Endothelial cell of umbilical vein (primary cell): ENCODE measurements at regions of chr19 and their contacts with region 1.

Region 1: DNA sequence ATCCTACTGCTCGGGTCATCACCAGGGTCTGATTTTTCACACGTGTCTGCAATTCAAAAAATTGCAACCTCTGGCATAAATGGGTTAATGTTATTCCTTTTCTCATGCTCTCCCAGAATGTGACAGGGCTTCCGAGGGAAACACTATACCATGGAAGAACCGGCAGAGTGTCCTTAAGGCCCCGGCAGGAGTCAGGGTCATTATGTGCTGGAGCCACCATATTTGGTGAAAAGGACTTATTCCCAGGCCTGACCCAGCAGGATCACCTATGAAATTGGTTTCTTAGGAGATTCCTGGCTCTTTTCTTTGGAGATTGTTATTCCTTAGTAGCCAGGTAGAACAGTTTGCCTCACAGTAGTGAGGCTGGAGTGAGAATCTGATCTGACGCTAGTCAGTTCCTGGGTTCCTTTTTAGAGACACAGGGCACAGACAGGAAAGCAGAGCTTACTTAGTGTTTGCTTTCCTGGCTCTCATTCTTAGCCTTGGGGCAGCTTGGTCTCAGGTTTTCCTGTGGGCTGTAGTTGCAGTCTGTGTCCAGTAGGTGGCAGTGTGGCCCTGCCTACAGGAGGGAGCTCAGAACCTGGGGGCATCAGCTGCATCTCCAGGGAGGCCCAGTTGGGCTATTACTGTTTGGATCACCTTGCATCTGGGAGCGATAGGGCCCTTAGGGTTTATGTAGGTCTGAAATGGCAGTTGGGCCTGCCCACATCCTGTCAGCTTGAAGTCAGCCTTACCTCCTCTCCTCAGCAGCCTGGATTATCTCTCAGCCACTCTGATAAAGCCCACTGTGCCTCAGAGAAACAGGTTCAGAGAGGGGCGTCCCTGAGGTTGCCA is 12.4 kb downstream of the SNRNP70 start:
- DNase-seq: peak; percentile 74
- H3K4me3 ChIP-seq: no peak overlapping the region
- H3K27ac ChIP-seq: no peak overlapping the region
- H3K4me1 ChIP-seq: no peaks in the 10 kb centered on the region
- H3K27me3 ChIP-seq: no peaks in the 10 kb centered on the region
- CTCF ChIP-seq: peak; percentile 96 to 98
- POLR2A ChIP-seq: no peak

Region 2: DNA sequence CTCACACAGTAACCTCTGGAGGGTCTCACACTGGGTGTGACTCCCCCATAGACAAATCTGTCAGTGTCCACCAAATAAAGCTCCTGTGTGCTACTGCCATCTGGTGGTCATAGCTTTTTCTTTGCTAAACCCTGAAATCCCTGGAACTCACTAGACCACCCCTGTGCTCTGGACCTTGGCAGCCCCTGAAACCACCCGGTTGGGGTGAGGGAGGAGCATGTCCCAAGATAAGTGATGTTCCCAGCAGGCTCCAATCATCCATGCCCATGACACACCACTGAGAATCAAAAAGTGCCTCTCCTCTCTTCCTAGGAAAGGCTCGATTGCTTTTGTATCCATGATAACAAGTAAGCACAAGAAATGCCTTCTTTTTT is 254.9 kb before region 1 on chr19:
- CTCF ChIA-PET with region 1: no interaction called
- POLR2A ChIA-PET with region 1: no interaction called
- dilution Hi-C with region 1: no loop called
- intact Hi-C with region 1: no loop called
- DNase-seq: peak; percentile 62
- H3K4me3 ChIP-seq: no peak overlapping the region
- H3K27ac ChIP-seq: no peak overlapping the region
- H3K4me1 ChIP-seq: no peaks in the 10 kb centered on the region
- H3K27me3 ChIP-seq: no peaks in the 10 kb centered on the region
- CTCF ChIP-seq: peak; percentile 73 to 79
- POLR2A ChIP-seq: no peak

Region 3: DNA sequence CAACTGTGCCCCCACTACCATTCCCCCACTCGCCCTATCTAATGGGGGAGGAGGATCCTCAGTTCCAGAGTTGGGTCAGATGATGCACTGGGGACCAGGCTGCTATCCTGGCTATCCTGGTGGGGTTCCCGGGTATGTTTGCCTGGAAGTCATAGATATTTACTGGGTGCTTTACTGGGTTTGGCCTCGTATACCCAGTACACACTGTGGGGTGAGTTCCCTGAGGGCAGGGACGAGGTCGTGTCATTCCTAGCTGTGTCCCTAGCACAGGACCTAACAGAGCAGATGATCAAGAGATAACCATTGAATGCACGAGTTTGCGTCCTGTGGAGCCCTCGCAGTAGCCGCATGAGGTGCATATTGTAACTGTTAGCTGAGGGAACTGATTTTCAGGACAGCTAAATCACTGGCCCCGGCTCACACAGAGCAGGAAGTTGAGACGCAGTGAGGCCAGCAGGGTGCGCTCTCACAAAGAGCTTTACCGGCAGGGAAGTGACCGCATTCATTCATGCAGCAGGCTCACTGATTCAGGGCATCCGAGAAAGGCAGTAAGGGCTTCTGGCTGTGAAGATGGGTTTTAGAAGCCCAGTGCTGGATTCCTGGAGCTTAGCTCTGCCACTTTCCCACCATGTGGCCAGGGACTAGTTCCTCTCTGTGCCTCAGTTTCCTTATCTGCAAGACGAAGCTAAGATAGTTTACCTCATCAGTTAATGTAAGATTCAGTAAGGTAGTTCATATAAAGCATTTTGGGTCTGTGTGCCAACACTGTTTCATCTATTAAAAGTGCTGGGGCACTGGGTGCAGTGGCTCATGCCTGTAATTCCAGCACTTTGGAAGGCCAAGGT is 98.0 kb before region 1 on chr19:
- CTCF ChIA-PET with region 1: interaction called, 15 read pairs
- POLR2A ChIA-PET with region 1: no interaction called
- dilution Hi-C with region 1: no loop called
- intact Hi-C with region 1: no loop called
- DNase-seq: peak; percentile 64
- H3K4me3 ChIP-seq: no peak overlapping the region
- H3K27ac ChIP-seq: no peak overlapping the region
- H3K4me1 ChIP-seq: peaks cover under 1% of the 10 kb centered on the region
- H3K27me3 ChIP-seq: no peaks in the 10 kb centered on the region
- CTCF ChIP-seq: peak; percentile 75 to 85
- POLR2A ChIP-seq: no peak

Region 4: DNA sequence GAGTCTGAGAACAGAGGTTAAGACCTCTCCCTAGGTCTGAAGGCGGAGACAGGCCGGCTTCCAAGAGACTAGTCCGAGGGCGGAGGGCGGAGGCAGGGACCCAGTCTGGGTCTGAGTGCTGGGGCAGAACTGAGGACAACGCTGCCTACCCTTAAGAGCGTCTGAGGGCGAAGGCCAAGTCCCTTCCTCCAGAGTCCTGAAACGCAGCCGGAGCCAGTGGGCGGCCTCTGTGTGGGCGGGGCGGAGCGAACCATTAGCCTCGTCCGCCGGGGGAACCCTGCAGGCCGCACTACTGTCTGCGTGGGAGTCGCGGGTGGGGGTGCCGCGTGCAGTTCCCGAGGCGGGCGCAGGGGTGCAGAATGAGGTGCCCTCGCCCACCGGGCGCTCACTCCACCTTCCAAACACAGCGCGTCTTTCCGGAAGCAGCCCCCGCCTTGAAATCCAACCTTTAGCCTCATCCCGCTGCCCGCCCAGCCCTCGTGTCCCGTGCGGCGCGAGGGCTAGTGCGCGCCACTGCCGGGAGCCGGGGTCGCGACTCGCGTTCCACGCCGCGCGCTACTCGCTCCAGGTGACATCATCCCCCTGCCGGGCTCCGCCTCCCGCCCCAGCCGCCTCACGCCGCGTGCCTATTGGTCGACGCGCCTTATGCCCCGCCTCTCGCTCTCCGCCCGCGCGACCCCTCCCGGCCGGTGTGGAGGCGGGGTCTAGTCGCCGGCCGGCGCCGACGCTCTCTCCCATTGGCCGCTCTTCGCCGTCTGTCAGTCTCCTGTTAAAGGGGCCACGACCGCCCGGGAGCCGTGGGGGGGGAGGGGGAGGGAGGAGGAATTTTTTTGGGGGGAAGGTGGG is 21.1 kb after region 1 on chr19 and contains the start of gene C19orf73:
- CTCF ChIA-PET with region 1: interaction called, 28 read pairs
- POLR2A ChIA-PET with region 1: interaction called, 4 read pairs
- dilution Hi-C with region 1: no loop called
- intact Hi-C with region 1: no loop called
- DNase-seq: peak; percentile 94
- H3K4me3 ChIP-seq: peak within 1 kb of the TSS; percentile 16 to 65 (median 57)
- H3K27ac ChIP-seq: peak within 1 kb of the TSS; percentile 63
- H3K4me1 ChIP-seq: peaks cover 14% of the 10 kb centered on the region
- H3K27me3 ChIP-seq: peaks cover 4 to 8% of the 10 kb centered on the region in 2 experiments
- CTCF ChIP-seq: peak in 1 of 2 donors; percentile 7
- POLR2A ChIP-seq: peak; percentile 53
- total RNA-seq, gene C19orf73: 1.5 TPM in 1 of 2 replicates, not detected in the other

Region 5: GRCh38 chr19:49133621-49134454 is 36.2 kb after region 1 on chr19:
- CTCF ChIA-PET with region 1: interaction called, 14 read pairs
- POLR2A ChIA-PET with region 1: no interaction called
- dilution Hi-C with region 1: no loop called
- intact Hi-C with region 1: no loop called
- DNase-seq: peak; percentile 54
- H3K4me3 ChIP-seq: peak overlapping the region in 1 of 3 experiments; percentile 30
- H3K27ac ChIP-seq: no peak overlapping the region
- H3K4me1 ChIP-seq: no peaks in the 10 kb centered on the region
- H3K27me3 ChIP-seq: peaks cover 0 to 7% of the 10 kb centered on the region in 2 experiments
- CTCF ChIP-seq: peak in 1 of 2 donors; percentile 6
- POLR2A ChIP-seq: no peak

Region 6: DNA sequence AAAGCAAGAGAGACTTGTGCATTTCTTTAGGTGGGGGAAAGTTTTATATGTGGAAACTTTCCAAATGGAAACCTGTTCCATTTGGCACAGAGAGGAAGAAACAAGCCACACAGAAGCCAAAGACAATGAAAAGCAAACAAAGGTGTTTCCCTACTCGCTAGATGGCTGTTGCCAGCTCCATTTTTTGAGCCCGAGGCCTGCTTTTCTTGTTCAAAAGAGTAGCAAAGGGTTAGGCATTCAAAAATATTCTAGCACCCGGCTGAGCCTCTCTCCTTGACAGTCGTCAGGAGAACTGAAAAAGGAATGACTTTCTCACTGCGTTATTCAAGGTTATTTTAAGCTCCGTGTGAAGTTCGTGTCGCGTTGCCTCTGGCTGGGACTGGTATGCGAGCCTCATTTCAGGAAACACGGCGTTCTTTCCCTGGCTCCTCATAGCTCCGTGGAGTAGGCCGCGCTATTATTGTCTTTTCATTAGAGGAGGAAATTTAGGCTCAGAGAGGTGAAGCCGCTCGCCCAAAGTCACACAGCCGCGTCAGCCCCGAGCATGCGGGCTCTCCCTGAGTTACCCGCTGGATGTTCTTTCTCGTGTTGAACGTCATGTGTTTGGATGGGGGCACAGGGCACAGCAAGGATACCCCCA is 67.6 kb after region 1 on chr19:
- CTCF ChIA-PET with region 1: interaction called, 10 read pairs
- POLR2A ChIA-PET with region 1: no interaction called
- dilution Hi-C with region 1: no loop called
- intact Hi-C with region 1: no loop called
- DNase-seq: peak; percentile 85
- H3K4me3 ChIP-seq: no peak overlapping the region
- H3K27ac ChIP-seq: peak overlapping the region; percentile 47
- H3K4me1 ChIP-seq: peaks cover 12% of the 10 kb centered on the region
- H3K27me3 ChIP-seq: no peaks in the 10 kb centered on the region
- CTCF ChIP-seq: no peak
- POLR2A ChIP-seq: no peak

Region 7: GRCh38 chr19:49216071-49216470 is 118.4 kb after region 1 on chr19:
- CTCF ChIA-PET with region 1: interaction called, 21 read pairs
- POLR2A ChIA-PET with region 1: no interaction called
- dilution Hi-C with region 1: no loop called
- intact Hi-C with region 1: no loop called
- DNase-seq: no peak
- H3K4me3 ChIP-seq: no peak overlapping the region
- H3K27ac ChIP-seq: no peak overlapping the region
- H3K4me1 ChIP-seq: no peaks in the 10 kb centered on the region
- H3K27me3 ChIP-seq: no peaks in the 10 kb centered on the region
- CTCF ChIP-seq: no peak
- POLR2A ChIP-seq: no peak